Activated CD4-positive, alpha-beta T cell treated with anti-CD3 and anti-CD28 coated beads, Interleukin-2, amount 10 ng/mL, durations not matched to agents 24 days and 14 days (primary cell): ENCODE measurements at regions of chr10 and their contacts with region 1.

Region 1: DNA sequence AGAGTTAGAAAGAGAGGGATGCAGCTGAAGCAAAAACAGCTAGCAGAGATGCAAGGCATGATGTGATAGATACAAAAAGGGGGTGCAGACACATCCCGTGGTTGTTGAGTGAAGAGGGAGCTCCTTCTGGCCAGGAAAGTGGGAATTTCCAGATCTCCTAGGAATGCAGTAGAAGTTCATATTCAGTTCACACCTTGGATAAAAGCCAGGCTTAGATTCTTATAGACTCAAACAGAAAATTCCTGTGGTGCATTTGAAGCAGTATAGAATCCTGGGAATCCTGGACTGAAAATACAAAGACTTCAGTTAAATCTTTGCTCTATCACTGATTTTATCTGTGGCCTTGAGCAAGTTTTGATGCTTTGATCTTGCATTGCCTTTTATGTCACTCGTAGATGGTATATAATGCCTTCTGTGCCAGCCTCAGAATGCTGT is 33.9 kb downstream of the SGPL1 start:
- DNase-seq: no peak
- H3K4me3 Mint-ChIP-seq: no peak overlapping the region
- H3K27ac Mint-ChIP-seq: no peak overlapping the region
- H3K4me1 Mint-ChIP-seq: peaks cover 21% of the 10 kb centered on the region
- H3K27me3 Mint-ChIP-seq: no peaks in the 10 kb centered on the region

Region 2: DNA sequence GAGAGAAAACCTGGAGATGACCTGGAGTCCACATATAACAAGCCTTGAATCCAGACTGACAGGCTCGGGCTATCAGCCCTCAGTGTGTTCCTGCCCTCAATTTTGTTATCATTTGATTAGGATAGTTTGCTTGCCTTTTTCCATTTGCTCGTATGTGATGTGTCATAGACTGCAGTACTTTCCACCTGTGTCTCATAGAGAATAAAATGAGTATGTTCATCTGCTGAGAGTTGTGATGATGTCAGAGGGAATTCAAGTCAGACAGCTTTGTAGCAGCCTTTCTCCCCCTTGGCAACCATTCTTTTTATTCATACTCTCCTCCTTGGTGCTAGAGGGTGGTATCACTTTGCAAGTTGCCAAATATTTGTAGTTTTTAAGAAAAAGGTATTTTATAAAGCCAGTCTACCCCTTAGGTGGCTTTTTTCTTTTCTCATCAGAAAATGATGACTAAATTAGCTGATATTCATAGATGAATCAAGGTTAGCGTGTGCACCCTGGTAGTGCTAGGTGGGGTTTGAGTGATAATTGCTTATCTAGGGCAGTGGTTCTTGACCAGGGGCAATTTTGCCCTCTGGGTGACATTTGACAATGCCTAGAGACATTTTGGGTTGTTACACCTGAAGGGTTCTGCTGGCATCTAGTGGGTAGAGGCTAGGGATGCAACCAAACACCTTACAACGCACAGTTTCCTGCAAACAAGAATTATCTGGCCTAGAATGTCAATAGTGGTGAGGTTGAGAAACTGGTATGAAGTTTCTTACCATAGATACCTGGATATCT is 28.4 kb before region 1 on chr10:
- intact Hi-C with region 1: loop called (anchors 2 kb)
- DNase-seq: no peak
- H3K4me3 Mint-ChIP-seq: peak overlapping the region; percentile 2
- H3K27ac Mint-ChIP-seq: peak overlapping the region; percentile 54
- H3K4me1 Mint-ChIP-seq: peaks cover 39% of the 10 kb centered on the region
- H3K27me3 Mint-ChIP-seq: no peaks in the 10 kb centered on the region

Region 3: DNA sequence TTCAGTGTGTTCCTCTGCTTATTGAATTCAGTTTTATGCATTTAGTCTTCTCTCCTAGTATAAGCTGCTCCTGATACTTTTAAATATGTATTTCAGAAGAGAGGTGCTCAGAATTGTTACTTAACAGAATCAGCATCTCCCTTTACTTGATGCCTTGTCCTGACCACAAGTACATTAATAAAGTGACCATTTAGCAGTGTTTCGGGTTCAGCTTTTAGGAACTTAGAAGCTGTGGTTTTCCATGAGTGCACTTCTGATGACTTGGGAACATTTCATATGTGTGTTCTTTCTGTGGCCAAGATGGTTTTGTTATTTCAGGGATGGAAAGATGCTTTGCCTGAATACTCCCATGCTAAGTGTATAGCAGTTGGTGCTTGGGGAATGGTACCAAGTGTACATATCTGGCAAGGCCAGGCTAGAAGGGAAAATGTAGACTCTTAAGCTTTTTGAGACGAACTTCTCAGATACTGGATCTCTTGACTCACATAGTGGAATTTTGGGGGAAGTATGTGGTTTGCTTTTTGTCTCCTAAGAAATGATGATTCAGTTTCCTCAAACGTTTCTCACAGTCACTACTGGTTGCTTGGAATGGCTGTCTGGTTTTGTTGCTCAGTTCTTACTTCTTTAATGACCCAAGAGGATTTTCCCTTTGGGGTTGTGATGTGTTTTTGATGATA is 16.6 kb before region 1 on chr10:
- intact Hi-C with region 1: loop called (anchors 2 kb)
- DNase-seq: no peak
- H3K4me3 Mint-ChIP-seq: peak overlapping the region; percentile 68
- H3K27ac Mint-ChIP-seq: peak overlapping the region; percentile 86
- H3K4me1 Mint-ChIP-seq: peaks cover 42% of the 10 kb centered on the region
- H3K27me3 Mint-ChIP-seq: no peaks in the 10 kb centered on the region

Region 4: DNA sequence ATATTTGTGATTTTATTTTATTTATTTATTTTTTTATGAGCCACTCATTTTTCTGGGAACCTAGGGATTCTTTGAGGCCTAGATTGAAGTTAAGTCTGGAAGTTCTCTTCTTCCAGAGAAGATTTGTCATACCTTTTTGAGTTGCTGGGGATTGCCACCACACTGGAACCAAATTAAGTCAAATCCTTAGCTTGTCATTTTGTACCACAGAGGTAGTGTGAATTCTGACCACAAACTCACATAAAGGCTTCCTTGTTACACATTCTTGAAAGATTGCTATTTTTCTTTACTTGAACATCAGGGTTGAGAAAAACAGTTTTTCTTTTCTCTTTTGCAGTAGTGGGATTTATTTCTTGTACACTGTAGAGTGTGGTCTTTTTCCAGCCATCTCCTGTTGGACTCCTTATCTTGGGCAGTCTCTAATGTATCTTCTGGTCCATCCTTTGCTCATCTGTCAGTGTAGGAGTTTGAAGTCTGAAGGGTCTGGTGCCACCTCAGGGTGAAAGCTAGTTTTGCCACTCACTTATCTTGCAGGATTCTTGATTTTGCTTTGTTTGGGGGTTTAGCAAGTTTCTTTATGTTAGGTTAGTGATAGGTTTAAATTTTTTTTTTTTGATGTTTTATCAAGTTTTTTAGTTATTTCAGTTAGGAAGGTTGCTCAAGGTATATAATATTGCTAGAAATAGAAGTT is 14.0 kb after region 1 on chr10:
- intact Hi-C with region 1: loop called (anchors 1 kb)
- DNase-seq: peak; percentile 18
- H3K4me3 Mint-ChIP-seq: no peak overlapping the region
- H3K27ac Mint-ChIP-seq: peak overlapping the region; percentile 60
- H3K4me1 Mint-ChIP-seq: peaks cover 16% of the 10 kb centered on the region
- H3K27me3 Mint-ChIP-seq: no peaks in the 10 kb centered on the region

Region 5: GRCh38 chr10:70925377-70926225 is 76.0 kb after region 1 on chr10:
- intact Hi-C with region 1: no loop called
- DNase-seq: peak; percentile 87
- H3K4me3 Mint-ChIP-seq: no peak overlapping the region
- H3K27ac Mint-ChIP-seq: no peak overlapping the region
- H3K4me1 Mint-ChIP-seq: peaks cover 6% of the 10 kb centered on the region
- H3K27me3 Mint-ChIP-seq: peaks cover 4% of the 10 kb centered on the region

Region 6: GRCh38 chr10:71371750-71372166 is 522.2 kb after region 1 on chr10:
- intact Hi-C with region 1: no loop called
- DNase-seq: no peak
- H3K4me3 Mint-ChIP-seq: no peak overlapping the region
- H3K27ac Mint-ChIP-seq: no peak overlapping the region
- H3K4me1 Mint-ChIP-seq: no peaks in the 10 kb centered on the region
- H3K27me3 Mint-ChIP-seq: peaks cover 8% of the 10 kb centered on the region